ENCODE measurements at regions of chr21 and their contacts with region 1.

Region 1: GRCh38 chr21:37257967-37258877 is 8.9 kb downstream of the VPS26C start:
- DNase-seq: peak; percentile 87
- ATAC-seq: peak; percentile 86
- H3K4me3 Mint-ChIP-seq: peak overlapping the region; percentile 83
- H3K27ac Mint-ChIP-seq: peak overlapping the region; percentile 99
- H3K4me1 Mint-ChIP-seq: peaks cover 54% of the 10 kb centered on the region
- H3K27me3 Mint-ChIP-seq: no peaks in the 10 kb centered on the region

Region 2: DNA sequence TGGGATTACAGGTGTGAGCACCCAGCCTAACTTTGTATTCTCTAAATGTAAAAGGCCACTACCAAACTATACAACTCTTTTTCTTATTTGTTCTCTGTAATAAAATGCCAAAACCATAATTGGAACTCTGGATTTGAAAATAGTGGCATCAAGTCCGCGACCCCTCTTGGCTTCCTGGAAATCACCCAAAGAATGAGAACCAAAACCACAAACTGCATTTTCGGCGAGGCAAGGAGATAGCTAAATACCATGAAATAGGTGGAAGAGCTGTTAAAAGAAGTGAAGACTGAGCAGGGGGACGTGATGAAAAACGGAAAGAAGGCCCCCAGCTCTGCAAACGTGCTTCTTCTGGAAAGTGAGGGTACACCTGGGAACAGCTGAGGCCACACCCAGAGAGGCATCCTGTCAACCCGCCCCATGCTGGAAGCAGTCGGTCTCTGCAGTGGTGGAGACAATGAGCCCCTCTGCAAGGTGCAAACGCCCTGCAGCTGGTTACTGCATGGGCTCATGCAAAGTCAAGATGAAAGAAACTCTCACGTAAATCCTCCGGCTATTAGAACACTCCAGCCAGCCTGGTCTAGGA is 13.6 kb before region 1 on chr21:
- POLR2A ChIA-PET with region 1: interaction called, 73 read pairs
- DNase-seq: peak; percentile 62
- ATAC-seq: peak; percentile 88
- H3K4me3 Mint-ChIP-seq: peak overlapping the region; percentile 85
- H3K27ac Mint-ChIP-seq: peak overlapping the region; percentile 95
- H3K4me1 Mint-ChIP-seq: peaks cover 81% of the 10 kb centered on the region
- H3K27me3 Mint-ChIP-seq: no peaks in the 10 kb centered on the region

Region 3: GRCh38 chr21:37281993-37282392 is 23.8 kb after region 1 on chr21:
- POLR2A ChIA-PET with region 1: no interaction called
- DNase-seq: no peak
- ATAC-seq: no peak
- H3K4me3 Mint-ChIP-seq: peak overlapping the region; percentile 61
- H3K27ac Mint-ChIP-seq: peak overlapping the region; percentile 70
- H3K4me1 Mint-ChIP-seq: no peaks in the 10 kb centered on the region
- H3K27me3 Mint-ChIP-seq: peaks cover 6% of the 10 kb centered on the region

Region 4: GRCh38 chr21:37366482-37367316 is 108.5 kb after region 1 on chr21 and contains the start of gene DYRK1A:
- POLR2A ChIA-PET with region 1: interaction called, 18 read pairs
- DNase-seq: peak; percentile 97
- ATAC-seq: peak; percentile 79
- H3K4me3 Mint-ChIP-seq: peak within 1 kb of the TSS; percentile 99
- H3K27ac Mint-ChIP-seq: peak within 1 kb of the TSS; percentile 99
- H3K4me1 Mint-ChIP-seq: peaks cover 38% of the 10 kb centered on the region
- H3K27me3 Mint-ChIP-seq: no peaks in the 10 kb centered on the region
- total RNA-seq, gene DYRK1A: 109 to 122 TPM

Region 5: GRCh38 chr21:37563641-37564340 is 305.6 kb after region 1 on chr21:
- POLR2A ChIA-PET with region 1: interaction called, 10 read pairs
- DNase-seq: peak; percentile 94
- ATAC-seq: peak; percentile 90
- H3K4me3 Mint-ChIP-seq: peak overlapping the region; percentile 95
- H3K27ac Mint-ChIP-seq: peak overlapping the region; percentile 99
- H3K4me1 Mint-ChIP-seq: peaks cover 23% of the 10 kb centered on the region
- H3K27me3 Mint-ChIP-seq: no peaks in the 10 kb centered on the region